Ascending aorta (tissue), 2 donors: ENCODE measurements at regions of chr2 and their contacts with region 1.

Region 1: GRCh38 chr2:85999061-85999831 is 106.4 kb downstream of the POLR1A start:
- DNase-seq: peak in 1 of 2 donors; percentile 69
- H3K4me3 ChIP-seq: peak overlapping the region in 1 of 2 donors; percentile 37
- H3K27ac ChIP-seq: peak overlapping the region; percentile 92 to 95
- H3K4me1 ChIP-seq: peaks cover 36 to 60% of the 10 kb centered on the region in 2 donors
- H3K27me3 ChIP-seq: no peaks in the 10 kb centered on the region
- CTCF ChIP-seq: no peak

Region 2: GRCh38 chr2:85830645-85831044 is 168.6 kb before region 1 on chr2:
- intact Hi-C with region 1: no loop called
- DNase-seq: no peak
- H3K4me3 ChIP-seq: no peak overlapping the region
- H3K27ac ChIP-seq: no peak overlapping the region
- H3K4me1 ChIP-seq: no peaks in the 10 kb centered on the region
- H3K27me3 ChIP-seq: no peaks in the 10 kb centered on the region
- CTCF ChIP-seq: peak in 1 of 3 experiments; percentile 13

Region 3: GRCh38 chr2:86020984-86021383 is 21.7 kb after region 1 on chr2:
- intact Hi-C with region 1: loop called (anchors 2 kb)
- DNase-seq: peak in 1 of 2 donors; percentile 84
- H3K4me3 ChIP-seq: no peak overlapping the region
- H3K27ac ChIP-seq: peak overlapping the region; percentile 31 to 38
- H3K4me1 ChIP-seq: peaks cover 0 to 16% of the 10 kb centered on the region in 2 donors
- H3K27me3 ChIP-seq: no peaks in the 10 kb centered on the region
- CTCF ChIP-seq: no peak

Region 4: GRCh38 chr2:86035883-86036668 is 36.8 kb after region 1 on chr2:
- intact Hi-C with region 1: loop called (anchors 5 kb)
- DNase-seq: peak; percentile 54 to 83
- H3K4me3 ChIP-seq: no peak overlapping the region
- H3K27ac ChIP-seq: peak overlapping the region; percentile 84 to 89
- H3K4me1 ChIP-seq: peaks cover 22 to 28% of the 10 kb centered on the region in 2 donors
- H3K27me3 ChIP-seq: no peaks in the 10 kb centered on the region
- CTCF ChIP-seq: peak in 2 of 3 experiments; percentile 15 to 17